ENCODE measurements at regions of chr10 and their contacts with region 1.

Region 1: GRCh38 chr10:62373995-62374861 is at the start of gene ZNF365:
- DNase-seq: peak; percentile 63 to 92 (median 83)
- H3K4me3 ChIP-seq: peak within 1 kb of the TSS; percentile 42 to 86 (median 76)
- H3K27ac ChIP-seq: peak within 1 kb of the TSS; percentile 58 to 99 (median 96)
- H3K27me3 ChIP-seq: no peaks in the 10 kb centered on the region
- CTCF ChIP-seq: peak in 18 of 56 donors; percentile 9 to 57 (median 24)
- total RNA-seq, gene ZNF365: 50.7 to 183 (median 129) TPM

Region 2: DNA sequence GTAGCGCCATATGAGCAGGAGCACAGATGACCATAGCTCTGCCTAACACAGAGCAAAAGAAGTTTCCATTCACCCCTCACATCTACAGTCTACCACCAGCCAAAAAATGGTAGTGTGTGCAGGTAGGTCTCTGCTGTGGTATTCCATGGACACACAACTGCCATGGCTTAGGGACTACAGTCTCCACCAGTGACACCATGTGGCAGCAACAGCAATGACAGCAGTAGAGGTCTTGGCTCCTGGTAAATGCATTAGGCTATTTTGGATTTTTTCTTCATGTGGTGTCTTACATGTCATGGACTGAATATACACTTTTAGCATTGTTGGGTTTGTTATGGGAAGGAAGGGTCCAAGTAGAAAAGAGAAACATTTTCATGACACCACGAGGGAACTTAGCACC is 781.6 kb before region 1 on chr10:
- intact Hi-C with region 1: no loop called
- DNase-seq: no peak
- H3K4me3 ChIP-seq: no peak overlapping the region
- H3K27ac ChIP-seq: no peak overlapping the region
- H3K27me3 ChIP-seq: no peaks in the 10 kb centered on the region
- CTCF ChIP-seq: peak in 13 of 56 donors; percentile 5 to 39 (median 22)

Region 3: DNA sequence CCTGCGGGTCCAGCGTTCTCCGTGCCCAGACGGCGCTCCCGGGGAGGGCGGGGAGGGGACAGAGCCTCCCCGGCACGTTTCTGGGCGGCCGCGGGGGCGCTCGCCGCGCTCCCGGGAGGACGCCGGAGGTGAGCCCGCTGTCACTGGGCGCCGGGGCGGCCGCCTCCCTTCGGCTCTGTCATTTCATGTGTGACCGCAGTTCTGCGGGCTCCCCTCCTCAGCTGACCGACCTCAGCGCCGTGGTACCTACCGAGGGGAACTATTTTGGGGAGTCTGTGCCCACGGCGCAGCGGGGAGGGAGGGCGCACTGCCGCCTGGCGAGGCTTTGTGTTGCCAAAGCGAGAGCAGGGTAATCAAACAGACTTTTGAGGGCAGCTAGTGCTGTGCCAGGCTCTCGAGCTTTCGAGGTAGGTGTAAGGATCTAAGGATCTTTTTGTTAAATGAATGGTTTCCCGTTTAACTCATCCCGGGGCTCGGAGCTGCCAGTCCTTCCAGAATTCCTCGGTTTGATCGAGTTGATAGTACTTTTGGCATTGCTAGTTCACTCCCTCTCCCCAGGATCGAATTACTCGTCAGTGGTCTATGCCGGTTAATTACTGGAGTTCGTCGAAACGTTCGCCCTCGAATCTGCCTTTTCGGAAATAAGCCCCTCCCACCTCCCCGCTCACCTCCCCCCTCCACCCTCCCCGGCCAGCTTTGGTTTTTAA is 470.9 kb before region 1 on chr10:
- intact Hi-C with region 1: loop called (anchors 10 kb)
- DNase-seq: peak in 9 of 10 donors; percentile 30 to 72 (median 51)
- H3K4me3 ChIP-seq: peak overlapping the region; percentile 54 to 98 (median 85)
- H3K27ac ChIP-seq: peak overlapping the region; percentile 74 to 99 (median 95)
- H3K27me3 ChIP-seq: no peaks in the 10 kb centered on the region
- CTCF ChIP-seq: peak in 47 of 56 donors; percentile 18 to 64 (median 44)

Region 4: GRCh38 chr10:62050893-62051433 is 323.3 kb before region 1 on chr10:
- intact Hi-C with region 1: loop called (anchors 10 kb)
- DNase-seq: peak in 3 of 10 donors; percentile 42 to 64 (median 52)
- H3K4me3 ChIP-seq: peak overlapping the region; percentile 44 to 88 (median 70)
- H3K27ac ChIP-seq: peak overlapping the region in 56 of 59 donors; percentile 67 to 99 (median 96)
- H3K27me3 ChIP-seq: no peaks in the 10 kb centered on the region
- CTCF ChIP-seq: peak in 1 of 56 donors; percentile 15

Region 5: DNA sequence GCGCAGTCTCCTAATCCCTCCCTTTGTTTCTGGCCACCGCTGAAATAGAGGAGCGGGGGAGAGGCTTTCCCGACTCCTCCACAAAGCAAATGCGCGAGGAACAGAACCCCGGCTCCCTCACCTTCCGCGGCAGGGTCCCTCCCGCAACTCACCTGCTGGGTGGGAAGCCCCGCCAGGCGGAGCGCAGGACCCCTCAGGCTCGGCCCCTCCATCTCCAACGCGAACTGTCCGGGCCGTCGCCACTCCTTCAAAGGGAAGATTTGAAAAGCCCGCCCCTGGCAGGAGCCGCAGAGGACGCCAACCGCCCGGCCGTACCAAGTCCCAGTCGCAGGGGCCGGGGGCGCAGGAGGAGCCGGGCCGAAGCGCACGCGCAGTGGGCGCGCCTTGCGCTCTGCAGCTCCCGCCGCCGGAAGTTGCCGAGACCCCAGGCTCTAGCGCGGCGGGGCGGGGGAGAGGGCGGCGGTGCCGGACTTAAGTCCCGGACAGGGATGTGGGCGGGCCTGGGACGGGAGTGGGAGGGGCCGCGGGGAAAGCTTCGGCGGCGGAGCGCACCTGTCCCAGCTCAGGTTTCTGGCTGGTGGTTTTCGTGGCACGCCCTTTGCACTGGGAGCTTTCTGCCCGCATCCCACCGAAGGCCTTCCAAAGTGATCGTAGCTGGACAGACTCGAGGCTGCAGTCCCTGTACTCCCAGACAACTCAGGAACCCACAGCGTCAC is 105.7 kb before region 1 on chr10 and contains the start of gene RTKN2:
- intact Hi-C with region 1: loop called in 1 of 2 experiments (anchors 5 kb)
- DNase-seq: peak; percentile 22 to 86 (median 62)
- H3K4me3 ChIP-seq: peak within 1 kb of the TSS; percentile 56 to 90 (median 77)
- H3K27ac ChIP-seq: peak within 1 kb of the TSS in 37 of 59 donors; percentile 1 to 80 (median 44)
- H3K27me3 ChIP-seq: no peaks in the 10 kb centered on the region
- CTCF ChIP-seq: peak in 4 of 56 donors; percentile 4 to 16 (median 14)
- total RNA-seq, gene RTKN2: 1.1 to 8.2 (median 3.5) TPM

Region 6: GRCh38 chr10:62437696-62438095 is 63.5 kb after region 1 on chr10:
- intact Hi-C with region 1: loop called in 1 of 2 experiments (anchors 10 kb)
- DNase-seq: no peak
- H3K4me3 ChIP-seq: no peak overlapping the region
- H3K27ac ChIP-seq: peak overlapping the region in 2 of 59 donors; percentile 44 to 51
- H3K27me3 ChIP-seq: no peaks in the 10 kb centered on the region
- CTCF ChIP-seq: peak; percentile 63 to 96 (median 86)

Region 7: GRCh38 chr10:62804356-62805230 is 430.4 kb after region 1 on chr10 and contains the start of gene ADO:
- intact Hi-C with region 1: loop called in 1 of 2 experiments (anchors 10 kb)
- DNase-seq: peak; percentile 89 to 95 (median 92)
- H3K4me3 ChIP-seq: peak within 1 kb of the TSS; percentile 73 to 98 (median 89)
- H3K27ac ChIP-seq: peak within 1 kb of the TSS; percentile 95 to 100 (median 99)
- H3K27me3 ChIP-seq: no peaks in the 10 kb centered on the region
- CTCF ChIP-seq: peak in 22 of 56 donors; percentile 5 to 43 (median 16)
- total RNA-seq, gene ADO: 21.1 to 44.3 (median 32.3) TPM

Region 8: DNA sequence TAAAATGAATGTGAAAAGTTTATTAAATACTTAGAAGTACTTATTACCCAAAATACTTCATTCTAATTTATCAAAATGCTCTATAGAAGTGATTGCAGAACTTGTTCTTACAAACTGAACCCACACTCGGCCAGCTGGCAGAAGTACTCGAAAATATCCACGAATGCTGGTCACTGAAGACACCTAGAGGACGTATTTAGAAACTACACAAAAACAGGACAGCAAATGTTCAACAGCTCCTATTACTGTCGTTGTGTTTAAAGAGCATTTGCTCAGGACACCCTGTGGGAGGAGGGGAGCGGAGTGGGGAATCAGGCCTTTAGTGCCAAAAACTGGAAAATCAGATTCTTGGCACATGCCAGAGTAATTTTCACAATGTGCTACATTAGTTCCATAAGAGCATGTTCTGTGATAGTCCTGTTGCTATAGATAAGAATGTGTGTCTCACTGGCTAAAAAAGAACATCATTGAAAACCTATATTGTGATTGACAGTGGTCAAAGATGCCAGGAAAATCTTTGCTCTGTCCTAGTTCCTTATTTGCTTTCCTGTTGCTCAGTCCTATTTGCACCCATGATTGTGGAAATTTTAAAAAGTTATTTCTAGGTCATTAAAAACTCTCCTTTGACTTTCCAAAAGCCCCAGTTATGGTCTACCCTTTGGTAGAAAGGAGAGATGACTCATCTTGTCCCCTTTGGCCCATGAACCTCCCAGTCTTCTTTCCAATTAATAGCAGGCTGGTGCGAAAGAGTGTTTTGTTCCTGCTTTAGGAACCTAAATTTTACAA is 709.9 kb after region 1 on chr10:
- intact Hi-C with region 1: no loop called
- DNase-seq: peak in 7 of 10 donors; percentile 6 to 77 (median 55)
- H3K4me3 ChIP-seq: no peak overlapping the region
- H3K27ac ChIP-seq: no peak overlapping the region
- H3K27me3 ChIP-seq: no peaks in the 10 kb centered on the region
- CTCF ChIP-seq: peak; percentile 22 to 93 (median 78)